MCF 10A (cell line): ENCODE measurements at regions of chr18 and their contacts with region 1.

Region 1: DNA sequence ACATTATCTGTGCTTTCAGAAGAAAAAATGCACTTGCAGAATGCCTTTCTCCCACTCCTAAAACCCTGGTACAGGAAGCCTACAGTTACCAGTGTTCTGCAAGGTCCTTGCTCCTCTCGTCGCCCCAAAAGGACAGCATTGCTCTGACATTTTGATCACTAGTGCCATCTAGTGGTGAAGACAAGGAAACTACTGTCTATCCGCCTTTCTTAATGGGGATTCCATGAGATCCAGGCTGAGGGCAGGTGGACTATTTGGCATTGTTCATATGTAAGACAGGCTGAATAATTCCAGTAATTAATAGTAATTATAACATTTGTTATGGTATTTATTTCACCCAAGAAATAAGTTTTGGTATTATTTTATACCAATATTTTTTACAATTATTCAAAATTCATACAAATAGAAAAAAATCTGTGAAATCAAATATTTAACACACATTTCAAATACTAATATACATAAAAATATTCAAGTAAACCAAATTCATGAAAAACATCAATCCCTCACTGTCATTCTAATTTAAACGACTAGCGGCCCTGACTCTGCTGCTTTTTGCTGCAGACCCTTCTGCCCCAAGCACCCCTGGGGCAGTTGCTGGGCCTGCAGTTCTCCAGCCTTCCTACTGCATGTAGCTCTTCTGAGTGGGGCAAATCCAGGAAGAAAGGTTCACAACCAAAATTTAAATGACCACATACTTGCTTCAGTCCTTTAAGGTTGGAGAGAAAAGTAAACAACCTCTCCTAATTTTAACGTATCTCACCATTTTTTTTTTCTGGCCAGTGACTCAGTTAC is 19.0 kb downstream of the TPGS2 start:
- DNase-seq: peak; percentile 73
- H3K4me3 Mint-ChIP-seq: no peak overlapping the region
- H3K27ac Mint-ChIP-seq: no peak overlapping the region
- H3K4me1 Mint-ChIP-seq: no peaks in the 10 kb centered on the region
- H3K27me3 Mint-ChIP-seq: no peaks in the 10 kb centered on the region
- CTCF ChIP-seq: peak; percentile 74

Region 2: DNA sequence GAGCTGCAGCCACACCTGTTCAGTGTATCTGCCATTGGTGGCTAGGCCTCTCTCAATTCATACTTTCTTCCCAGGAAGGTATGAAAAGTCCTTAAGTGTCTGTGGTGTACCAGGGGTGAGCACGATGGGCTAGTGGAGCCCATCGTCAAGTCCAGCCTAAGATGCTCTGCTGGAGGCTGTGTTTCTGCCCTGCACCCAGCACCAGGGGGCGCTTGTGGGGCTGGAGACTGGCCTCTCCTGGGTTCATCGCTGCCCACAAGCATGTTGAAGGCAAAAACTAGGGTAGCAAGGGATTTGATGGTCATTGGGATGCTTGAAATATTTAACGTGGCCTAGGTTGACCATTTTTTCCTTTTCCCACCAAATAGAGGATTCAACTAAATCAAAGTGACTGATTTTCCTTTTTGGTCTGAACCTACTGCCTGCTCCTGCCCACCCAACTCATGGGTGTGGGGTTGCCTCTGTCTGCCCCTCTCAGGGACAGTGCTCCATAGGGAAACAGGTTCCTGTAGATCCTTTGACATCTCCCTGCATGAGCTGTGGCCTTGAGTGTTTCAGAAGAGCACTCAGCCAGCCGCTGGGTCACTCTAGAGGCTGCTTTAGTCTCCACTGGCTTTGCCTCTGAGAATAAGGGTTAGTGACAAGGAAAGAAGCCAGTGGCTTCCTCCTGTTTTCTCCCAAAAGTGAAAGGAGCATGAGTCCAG is 40.0 kb before region 1 on chr18:
- CTCF ChIA-PET with region 1: no interaction called
- POLR2A ChIA-PET with region 1: no interaction called
- intact Hi-C with region 1: loop called (anchors 1 kb)
- DNase-seq: peak; percentile 38
- H3K4me3 Mint-ChIP-seq: no peak overlapping the region
- H3K27ac Mint-ChIP-seq: no peak overlapping the region
- H3K4me1 Mint-ChIP-seq: peaks cover 7% of the 10 kb centered on the region
- H3K27me3 Mint-ChIP-seq: no peaks in the 10 kb centered on the region
- CTCF ChIP-seq: no peak

Region 3: GRCh38 chr18:36798738-36799473 is 10.9 kb before region 1 on chr18:
- CTCF ChIA-PET with region 1: interaction called, 17 read pairs
- POLR2A ChIA-PET with region 1: no interaction called
- intact Hi-C with region 1: no loop called
- DNase-seq: no peak
- H3K4me3 Mint-ChIP-seq: no peak overlapping the region
- H3K27ac Mint-ChIP-seq: no peak overlapping the region
- H3K4me1 Mint-ChIP-seq: no peaks in the 10 kb centered on the region
- H3K27me3 Mint-ChIP-seq: no peaks in the 10 kb centered on the region
- CTCF ChIP-seq: no peak

Region 4: DNA sequence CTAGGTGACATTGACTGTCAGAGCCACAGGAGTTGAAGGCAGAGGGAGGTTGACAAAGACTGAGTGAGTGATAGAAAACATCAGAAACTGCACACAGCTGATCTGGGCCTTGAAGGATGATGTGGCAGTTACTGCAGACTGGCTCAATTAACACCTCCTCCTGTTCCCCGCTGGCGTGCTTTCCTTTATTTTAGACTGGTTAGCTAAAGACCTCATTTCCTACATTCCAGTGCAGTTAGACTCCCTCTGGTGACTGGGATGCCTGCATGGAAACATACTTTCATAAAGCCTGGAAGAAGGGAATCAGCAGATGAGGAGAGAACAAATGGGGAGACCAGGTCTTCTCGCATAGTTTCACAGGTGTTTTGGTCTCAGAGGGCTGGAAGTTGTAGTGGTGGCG is 11.9 kb after region 1 on chr18:
- CTCF ChIA-PET with region 1: interaction called, 35 read pairs
- POLR2A ChIA-PET with region 1: no interaction called
- intact Hi-C with region 1: no loop called
- DNase-seq: no peak
- H3K4me3 Mint-ChIP-seq: no peak overlapping the region
- H3K27ac Mint-ChIP-seq: no peak overlapping the region
- H3K4me1 Mint-ChIP-seq: no peaks in the 10 kb centered on the region
- H3K27me3 Mint-ChIP-seq: no peaks in the 10 kb centered on the region
- CTCF ChIP-seq: no peak

Region 5: DNA sequence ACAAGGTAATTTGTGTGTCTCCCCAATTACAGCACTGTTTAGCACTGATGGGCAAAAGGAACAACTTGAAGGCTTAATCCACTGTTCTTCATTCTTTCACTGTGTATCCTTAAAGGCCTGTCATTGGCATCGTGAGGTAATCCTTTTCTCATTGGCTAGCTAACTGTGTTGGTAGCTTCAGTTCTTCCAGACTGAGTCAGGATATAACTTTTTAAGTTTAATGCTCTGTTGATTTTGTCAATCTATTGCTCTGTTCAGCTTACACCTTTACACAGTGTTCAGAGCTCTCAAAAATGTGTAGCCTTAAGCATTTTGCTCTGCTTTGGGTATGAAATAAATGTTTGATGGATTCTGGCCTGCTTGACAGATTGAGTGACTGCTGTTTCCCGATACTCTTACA is 167.3 kb after region 1 on chr18:
- CTCF ChIA-PET with region 1: no interaction called
- POLR2A ChIA-PET with region 1: no interaction called
- intact Hi-C with region 1: no loop called
- DNase-seq: no peak
- H3K4me3 Mint-ChIP-seq: no peak overlapping the region
- H3K27ac Mint-ChIP-seq: no peak overlapping the region
- H3K4me1 Mint-ChIP-seq: no peaks in the 10 kb centered on the region
- H3K27me3 Mint-ChIP-seq: no peaks in the 10 kb centered on the region
- CTCF ChIP-seq: no peak